CD8-positive, alpha-beta T cell (primary cell): ENCODE measurements at regions of chr13 and their contacts with region 1.

Region 1: GRCh38 chr13:41916173-41916954 is 44.5 kb downstream of the VWA8 start:
- DNase-seq: peak in 2 of 9 experiments; percentile 33 to 59
- ATAC-seq: peak; percentile 65
- H3K4me3 ChIP-seq: no peak overlapping the region
- H3K4me3 Mint-ChIP-seq: peak overlapping the region; percentile 26
- H3K27ac ChIP-seq: peak overlapping the region in 1 of 2 experiments; percentile 31
- H3K27ac Mint-ChIP-seq: peak overlapping the region; percentile 42
- H3K4me1 ChIP-seq: peaks cover 24% of the 10 kb centered on the region
- H3K4me1 Mint-ChIP-seq: peaks cover 47% of the 10 kb centered on the region
- H3K27me3 ChIP-seq: no peaks in the 10 kb centered on the region
- H3K27me3 Mint-ChIP-seq: no peaks in the 10 kb centered on the region
- CTCF ChIP-seq: no peak

Region 2: DNA sequence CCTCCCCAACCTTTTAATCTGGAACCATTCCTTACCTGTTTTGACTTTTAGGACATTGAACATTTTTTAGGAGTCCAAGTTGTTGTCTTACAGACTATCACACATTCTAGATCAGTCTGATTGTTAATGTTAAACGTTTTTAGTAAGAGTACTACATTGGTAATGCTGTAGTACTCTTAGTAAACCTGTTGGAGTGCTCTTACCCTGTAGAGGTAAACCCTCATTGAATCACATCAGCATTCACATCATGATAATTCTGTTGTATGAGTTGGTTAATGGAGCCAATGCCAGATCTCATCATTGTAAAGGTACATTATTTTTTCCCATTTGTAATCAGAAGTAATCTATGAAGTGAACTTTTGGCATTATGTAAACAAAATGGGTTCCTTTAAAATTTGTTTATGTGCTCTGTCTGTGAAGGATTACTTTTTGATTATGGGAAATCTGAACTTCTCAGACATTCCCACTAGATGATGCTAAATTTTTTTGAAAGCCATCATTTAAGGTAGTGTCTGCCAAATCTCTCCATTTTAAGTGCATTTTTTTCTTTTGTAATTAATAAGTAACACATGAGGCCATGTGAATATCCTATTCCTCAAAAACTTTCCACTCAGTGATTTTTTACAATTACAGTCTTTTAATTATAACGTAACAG is 10.6 kb before region 1 on chr13:
- CTCF ChIA-PET with region 1: interaction called, 3 read pairs
- POLR2A ChIA-PET with region 1: no interaction called
- intact Hi-C with region 1: loop called in 1 of 2 experiments (anchors 1 kb)
- DNase-seq: peak in 2 of 9 experiments; percentile 46 to 61
- ATAC-seq: peak; percentile 98
- H3K4me3 ChIP-seq: no peak overlapping the region
- H3K4me3 Mint-ChIP-seq: no peak overlapping the region
- H3K27ac ChIP-seq: no peak overlapping the region
- H3K27ac Mint-ChIP-seq: no peak overlapping the region
- H3K4me1 ChIP-seq: no peaks in the 10 kb centered on the region
- H3K4me1 Mint-ChIP-seq: peaks cover 5% of the 10 kb centered on the region
- H3K27me3 ChIP-seq: no peaks in the 10 kb centered on the region
- H3K27me3 Mint-ChIP-seq: no peaks in the 10 kb centered on the region
- CTCF ChIP-seq: peak; percentile 76

Region 3: DNA sequence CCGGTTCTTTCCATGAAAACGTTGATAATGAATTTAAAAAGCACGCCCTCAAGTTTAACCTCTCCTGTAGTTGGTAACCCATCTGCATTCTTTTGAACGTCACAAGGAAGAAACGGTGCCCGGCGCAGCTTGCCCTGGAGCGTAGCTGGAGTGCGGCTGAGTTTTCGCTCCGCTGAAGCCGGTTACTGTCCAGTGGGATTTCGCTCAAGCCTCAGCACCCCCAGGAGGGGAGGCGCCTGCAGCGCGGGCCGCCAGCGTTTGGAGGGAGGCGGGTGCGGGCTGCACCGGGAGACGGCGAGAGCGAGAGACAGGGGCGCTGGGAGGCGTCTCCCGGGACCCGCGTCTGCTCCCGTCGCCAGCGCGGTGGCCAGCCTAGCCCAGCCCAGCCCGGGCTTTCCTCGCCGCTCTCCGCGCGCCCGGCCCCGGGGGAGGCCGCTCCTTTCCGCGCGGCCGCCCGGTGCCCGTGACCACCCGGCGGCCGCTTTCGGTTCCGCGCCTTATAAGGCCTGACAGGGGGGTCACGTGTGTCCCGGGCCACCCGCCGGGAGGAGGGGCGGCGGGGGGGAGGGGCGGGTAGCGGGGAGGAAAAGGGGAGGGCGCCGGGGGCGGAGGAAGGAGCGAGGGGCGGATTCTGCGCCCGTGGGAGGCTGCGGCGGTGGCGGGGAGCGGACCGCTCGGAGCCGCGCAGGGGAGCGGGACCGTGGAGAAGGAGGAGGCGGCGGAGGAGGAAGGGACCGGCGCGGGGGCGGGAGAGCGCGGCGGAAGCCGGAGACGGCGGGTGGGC is 123.8 kb after region 1 on chr13:
- CTCF ChIA-PET with region 1: no interaction called
- POLR2A ChIA-PET with region 1: no interaction called
- intact Hi-C with region 1: loop called (anchors 2 to 5 kb)
- DNase-seq: peak; percentile 70 to 94 (median 88)
- ATAC-seq: peak; percentile 81
- H3K4me3 ChIP-seq: peak overlapping the region; percentile 47 to 88
- H3K4me3 Mint-ChIP-seq: peak overlapping the region; percentile 91
- H3K27ac ChIP-seq: peak overlapping the region; percentile 23 to 72
- H3K27ac Mint-ChIP-seq: peak overlapping the region; percentile 72
- H3K4me1 ChIP-seq: peaks cover 9% of the 10 kb centered on the region
- H3K4me1 Mint-ChIP-seq: peaks cover 16% of the 10 kb centered on the region
- H3K27me3 ChIP-seq: no peaks in the 10 kb centered on the region
- H3K27me3 Mint-ChIP-seq: no peaks in the 10 kb centered on the region
- CTCF ChIP-seq: no peak

Region 4: GRCh38 chr13:42048682-42049453 is 132.5 kb after region 1 on chr13:
- CTCF ChIA-PET with region 1: no interaction called
- POLR2A ChIA-PET with region 1: no interaction called
- intact Hi-C with region 1: loop called in 1 of 2 experiments (anchors 5 kb)
- DNase-seq: peak; percentile 23 to 74 (median 60)
- ATAC-seq: peak; percentile 70
- H3K4me3 ChIP-seq: peak overlapping the region; percentile 80 to 83
- H3K4me3 Mint-ChIP-seq: peak overlapping the region; percentile 86
- H3K27ac ChIP-seq: peak overlapping the region in 1 of 2 experiments; percentile 20
- H3K27ac Mint-ChIP-seq: peak overlapping the region; percentile 60
- H3K4me1 ChIP-seq: peaks cover 10% of the 10 kb centered on the region
- H3K4me1 Mint-ChIP-seq: peaks cover 12% of the 10 kb centered on the region
- H3K27me3 ChIP-seq: no peaks in the 10 kb centered on the region
- H3K27me3 Mint-ChIP-seq: no peaks in the 10 kb centered on the region
- CTCF ChIP-seq: no peak